Naive thymus-derived CD4-positive, alpha-beta T cell (primary cell): ENCODE measurements at regions of chr19 and their contacts with region 1.

Region 1: DNA sequence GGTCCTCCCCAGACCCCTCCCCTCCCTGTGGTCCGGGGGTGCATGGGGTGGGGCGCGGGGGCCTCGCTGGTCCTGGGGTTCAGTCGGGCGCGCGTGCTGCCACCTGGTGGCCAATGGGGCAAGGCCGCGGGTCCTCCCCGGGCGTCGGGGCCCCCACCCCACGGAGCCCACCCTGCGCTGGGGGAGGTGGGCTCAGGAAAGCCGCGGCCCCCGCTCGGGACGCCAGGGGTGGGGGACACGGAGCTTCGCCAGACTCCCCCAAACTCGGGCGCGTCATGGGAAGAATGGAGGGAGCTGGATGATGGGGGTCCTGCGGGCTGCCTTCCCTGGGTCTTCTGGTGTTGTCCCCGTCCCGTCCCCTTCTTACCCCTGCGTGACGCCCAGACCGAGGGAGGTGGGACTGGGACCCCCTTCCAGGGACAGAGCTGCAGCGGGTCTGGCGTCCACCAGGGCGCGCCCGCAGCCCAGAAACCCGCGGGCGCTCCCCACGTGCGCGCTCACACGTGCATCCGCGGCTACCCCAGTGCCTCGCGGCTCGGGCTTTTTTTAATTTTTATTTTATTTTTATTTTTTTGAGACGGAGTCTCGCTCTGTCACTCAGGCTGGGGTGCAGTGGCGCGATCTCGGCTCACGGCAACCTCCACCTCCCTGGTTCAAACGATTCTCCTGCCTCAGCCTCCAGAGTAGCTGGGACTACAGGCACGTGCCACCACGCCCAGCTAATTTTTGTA is 19.8 kb upstream of the TCF3 start:
- DNase-seq: peak in 8 of 9 donors; percentile 32 to 74 (median 60)
- ATAC-seq: peak; percentile 75
- H3K4me3 ChIP-seq: no peak overlapping the region
- H3K4me3 Mint-ChIP-seq: peak overlapping the region in 2 of 10 donors; percentile 40
- H3K27ac ChIP-seq: no peak overlapping the region
- H3K27ac Mint-ChIP-seq: no peak overlapping the region
- H3K4me1 ChIP-seq: peaks cover 0 to 12% of the 10 kb centered on the region in 2 donors
- H3K4me1 Mint-ChIP-seq: peaks cover 6 to 19% (median 10%) of the 10 kb centered on the region in 7 donors
- H3K27me3 ChIP-seq: peaks cover 2 to 21% of the 10 kb centered on the region in 2 donors
- H3K27me3 Mint-ChIP-seq: peaks cover 38 to 67% (median 45%) of the 10 kb centered on the region in 5 donors

Region 2: DNA sequence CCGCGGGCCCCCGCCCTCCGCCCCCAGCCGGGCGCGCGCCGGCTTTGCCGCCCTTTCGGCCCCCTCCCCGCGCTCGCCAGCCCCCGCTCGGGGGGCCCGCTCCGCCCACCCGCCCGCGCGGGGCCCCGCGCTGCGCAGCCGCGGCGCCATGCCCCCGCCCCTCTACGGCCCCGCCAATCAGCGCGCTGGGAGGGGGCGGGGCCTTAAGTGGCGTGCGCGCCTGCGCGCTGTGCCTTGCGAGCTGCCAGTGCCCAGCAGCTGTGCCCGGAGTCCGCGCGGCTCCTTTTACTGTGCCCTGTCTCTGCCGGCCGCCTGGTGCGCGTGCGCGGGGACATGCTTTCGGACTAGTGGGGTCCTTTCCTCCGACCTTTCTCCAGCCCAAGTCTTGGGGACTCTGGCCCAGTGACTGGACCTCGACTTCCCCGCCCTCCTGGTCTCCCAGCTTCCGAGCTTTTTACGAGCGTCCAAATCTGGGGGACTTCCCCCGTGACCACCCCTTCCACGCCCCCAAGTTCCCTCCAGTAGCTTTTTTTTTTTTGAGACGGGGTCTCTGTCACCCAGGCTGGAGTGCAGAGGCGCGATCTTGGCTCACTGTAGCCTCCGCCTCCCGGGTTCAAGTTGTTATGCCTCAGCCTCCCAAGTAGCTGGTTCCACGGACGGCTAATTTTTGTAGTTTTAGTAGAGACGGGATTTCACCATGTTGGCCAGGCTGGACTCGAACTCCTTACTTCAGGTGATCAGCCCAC is 79.3 kb before region 1 on chr19 and contains the start of gene MBD3:
- CTCF ChIA-PET with region 1: interaction called, 5 read pairs
- POLR2A ChIA-PET with region 1: no interaction called
- intact Hi-C with region 1: loop called in 1 of 2 experiments (anchors 1 kb)
- DNase-seq: peak; percentile 81 to 92 (median 88)
- ATAC-seq: peak; percentile 92
- H3K4me3 ChIP-seq: peak within 1 kb of the TSS; percentile 86
- H3K4me3 Mint-ChIP-seq: peak within 1 kb of the TSS; percentile 84 to 92 (median 90)
- H3K27ac ChIP-seq: peak within 1 kb of the TSS; percentile 99
- H3K27ac Mint-ChIP-seq: peak within 1 kb of the TSS; percentile 79 to 95 (median 91)
- H3K4me1 ChIP-seq: peaks cover 10 to 16% of the 10 kb centered on the region in 2 donors
- H3K4me1 Mint-ChIP-seq: peaks cover 8 to 22% (median 15%) of the 10 kb centered on the region in 7 donors
- H3K27me3 ChIP-seq: no peaks in the 10 kb centered on the region
- H3K27me3 Mint-ChIP-seq: no peaks in the 10 kb centered on the region
- total RNA-seq, gene MBD3: 50.1 to 87.8 (median 64.6) TPM

Region 3: GRCh38 chr19:1652471-1653299 is 19.5 kb before region 1 on chr19 and contains the start of gene TCF3:
- CTCF ChIA-PET with region 1: interaction called, 6 read pairs
- POLR2A ChIA-PET with region 1: interaction called, 3 read pairs
- intact Hi-C with region 1: loop called in 1 of 2 experiments (anchors 2 kb)
- DNase-seq: peak; percentile 96 to 100 (median 99)
- ATAC-seq: peak; percentile 96
- H3K4me3 ChIP-seq: peak within 1 kb of the TSS; percentile 86
- H3K4me3 Mint-ChIP-seq: peak within 1 kb of the TSS; percentile 86 to 96 (median 91)
- H3K27ac ChIP-seq: peak within 1 kb of the TSS; percentile 99
- H3K27ac Mint-ChIP-seq: peak within 1 kb of the TSS; percentile 87 to 98 (median 95)
- H3K4me1 ChIP-seq: peaks cover 4 to 8% of the 10 kb centered on the region in 2 donors
- H3K4me1 Mint-ChIP-seq: peaks cover 7 to 14% (median 10%) of the 10 kb centered on the region in 7 donors
- H3K27me3 ChIP-seq: no peaks in the 10 kb centered on the region
- H3K27me3 Mint-ChIP-seq: peaks cover 0 to 4% (median 0%) of the 10 kb centered on the region in 5 donors
- total RNA-seq, gene TCF3: 66.6 to 83.6 (median 78.3) TPM

Region 4: GRCh38 chr19:1736927-1737326 is 64.7 kb after region 1 on chr19:
- CTCF ChIA-PET with region 1: no interaction called
- POLR2A ChIA-PET with region 1: no interaction called
- intact Hi-C with region 1: no loop called
- DNase-seq: no peak
- ATAC-seq: no peak
- H3K4me3 ChIP-seq: no peak overlapping the region
- H3K4me3 Mint-ChIP-seq: no peak overlapping the region
- H3K27ac ChIP-seq: no peak overlapping the region
- H3K27ac Mint-ChIP-seq: no peak overlapping the region
- H3K4me1 ChIP-seq: no peaks in the 10 kb centered on the region
- H3K4me1 Mint-ChIP-seq: peaks cover 0 to 1% (median 0%) of the 10 kb centered on the region in 7 donors
- H3K27me3 ChIP-seq: peaks cover 0 to 3% of the 10 kb centered on the region in 2 donors
- H3K27me3 Mint-ChIP-seq: peaks cover 20 to 59% (median 39%) of the 10 kb centered on the region in 5 donors

Region 5: GRCh38 chr19:1812469-1813196 is 140.4 kb after region 1 on chr19:
- CTCF ChIA-PET with region 1: interaction called, 3 read pairs
- POLR2A ChIA-PET with region 1: no interaction called
- intact Hi-C with region 1: loop called in 1 of 2 experiments (anchors 1 kb)
- DNase-seq: peak; percentile 70 to 88 (median 84)
- ATAC-seq: peak; percentile 85
- H3K4me3 ChIP-seq: peak overlapping the region; percentile 65
- H3K4me3 Mint-ChIP-seq: peak overlapping the region; percentile 93 to 99 (median 96)
- H3K27ac ChIP-seq: peak overlapping the region; percentile 63
- H3K27ac Mint-ChIP-seq: peak overlapping the region; percentile 82 to 97 (median 92)
- H3K4me1 ChIP-seq: peaks cover 0 to 8% of the 10 kb centered on the region in 2 donors
- H3K4me1 Mint-ChIP-seq: peaks cover 9 to 19% (median 11%) of the 10 kb centered on the region in 7 donors
- H3K27me3 ChIP-seq: no peaks in the 10 kb centered on the region
- H3K27me3 Mint-ChIP-seq: no peaks in the 10 kb centered on the region